Activated CD8-positive, alpha-beta T cell treated with anti-CD3 and anti-CD28 coated beads for 36 hours (primary cell): ENCODE measurements at regions of chr10 and their contacts with region 1.

Region 1: DNA sequence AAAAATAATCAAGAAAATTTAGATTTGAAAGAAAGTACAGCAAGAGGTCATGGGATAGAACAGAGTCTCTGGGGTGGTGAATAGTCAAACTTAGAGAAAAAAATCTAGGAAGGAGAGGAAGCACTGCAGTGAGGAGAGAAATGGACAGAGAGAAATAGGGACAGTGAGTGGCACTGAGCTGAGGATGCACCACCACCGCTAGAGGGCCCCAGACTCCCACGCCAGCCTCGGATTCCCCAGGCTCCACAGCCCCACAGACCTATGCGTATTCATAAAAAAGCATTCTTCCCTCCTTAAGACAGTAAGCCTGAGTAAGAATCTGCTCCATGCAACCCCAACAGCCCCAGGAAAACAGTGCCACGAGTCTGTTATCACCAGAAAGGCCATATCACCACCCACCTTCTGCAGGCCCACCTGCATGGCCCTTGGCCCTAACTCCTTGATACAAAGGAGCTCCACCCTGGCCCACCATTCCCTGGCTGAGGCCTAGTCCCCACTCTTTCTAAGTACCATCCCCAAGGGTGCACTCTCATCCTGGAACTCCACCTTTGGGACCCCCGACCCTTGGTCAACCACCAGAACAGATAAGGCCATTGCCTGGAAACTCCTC is 91.0 kb downstream of the ALOX5 start:
- DNase-seq: peak; percentile 85
- ATAC-seq: peak; percentile 98
- H3K4me3 Mint-ChIP-seq: no peak overlapping the region
- H3K27ac Mint-ChIP-seq: no peak overlapping the region
- H3K4me1 Mint-ChIP-seq: peaks cover 18% of the 10 kb centered on the region
- H3K27me3 Mint-ChIP-seq: no peaks in the 10 kb centered on the region
- CTCF ChIP-seq: peak; percentile 94

Region 2: GRCh38 chr10:45265995-45266394 is 199.1 kb before region 1 on chr10:
- CTCF ChIA-PET with region 1: no interaction called
- POLR2A ChIA-PET with region 1: no interaction called
- intact Hi-C with region 1: no loop called
- DNase-seq: no peak
- ATAC-seq: no peak
- H3K4me3 Mint-ChIP-seq: no peak overlapping the region
- H3K27ac Mint-ChIP-seq: no peak overlapping the region
- H3K4me1 Mint-ChIP-seq: no peaks in the 10 kb centered on the region
- H3K27me3 Mint-ChIP-seq: peaks cover 24% of the 10 kb centered on the region
- CTCF ChIP-seq: no peak

Region 3: GRCh38 chr10:45453639-45454255 is 11.3 kb before region 1 on chr10:
- CTCF ChIA-PET with region 1: interaction called, 10 read pairs
- POLR2A ChIA-PET with region 1: no interaction called
- intact Hi-C with region 1: no loop called
- DNase-seq: no peak
- ATAC-seq: no peak
- H3K4me3 Mint-ChIP-seq: no peak overlapping the region
- H3K27ac Mint-ChIP-seq: no peak overlapping the region
- H3K4me1 Mint-ChIP-seq: peaks cover 11% of the 10 kb centered on the region
- H3K27me3 Mint-ChIP-seq: no peaks in the 10 kb centered on the region
- CTCF ChIP-seq: no peak

Region 4: DNA sequence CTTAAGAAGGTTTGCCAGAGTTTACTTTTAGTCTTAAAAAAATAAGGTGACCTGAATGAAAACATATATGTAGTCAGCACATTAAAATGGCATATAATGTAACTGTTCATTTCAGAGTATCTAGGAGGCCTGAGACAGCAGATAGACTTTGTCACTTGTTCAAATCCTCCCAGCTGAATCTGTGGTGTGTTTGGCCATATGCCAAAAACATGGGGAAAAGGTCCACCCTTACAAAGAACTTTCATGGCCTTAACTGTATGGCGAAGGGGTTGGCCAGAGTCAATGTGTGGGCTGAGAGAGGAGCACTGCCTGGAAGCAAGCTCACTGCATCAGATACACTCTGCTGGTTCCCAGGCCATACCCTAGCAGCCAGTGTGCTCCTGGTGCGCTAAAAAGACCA is 22.7 kb after region 1 on chr10:
- CTCF ChIA-PET with region 1: interaction called, 10 read pairs
- POLR2A ChIA-PET with region 1: interaction called, 3 read pairs
- intact Hi-C with region 1: no loop called
- DNase-seq: no peak
- ATAC-seq: no peak
- H3K4me3 Mint-ChIP-seq: no peak overlapping the region
- H3K27ac Mint-ChIP-seq: no peak overlapping the region
- H3K4me1 Mint-ChIP-seq: no peaks in the 10 kb centered on the region
- H3K27me3 Mint-ChIP-seq: no peaks in the 10 kb centered on the region
- CTCF ChIP-seq: no peak

Region 5: DNA sequence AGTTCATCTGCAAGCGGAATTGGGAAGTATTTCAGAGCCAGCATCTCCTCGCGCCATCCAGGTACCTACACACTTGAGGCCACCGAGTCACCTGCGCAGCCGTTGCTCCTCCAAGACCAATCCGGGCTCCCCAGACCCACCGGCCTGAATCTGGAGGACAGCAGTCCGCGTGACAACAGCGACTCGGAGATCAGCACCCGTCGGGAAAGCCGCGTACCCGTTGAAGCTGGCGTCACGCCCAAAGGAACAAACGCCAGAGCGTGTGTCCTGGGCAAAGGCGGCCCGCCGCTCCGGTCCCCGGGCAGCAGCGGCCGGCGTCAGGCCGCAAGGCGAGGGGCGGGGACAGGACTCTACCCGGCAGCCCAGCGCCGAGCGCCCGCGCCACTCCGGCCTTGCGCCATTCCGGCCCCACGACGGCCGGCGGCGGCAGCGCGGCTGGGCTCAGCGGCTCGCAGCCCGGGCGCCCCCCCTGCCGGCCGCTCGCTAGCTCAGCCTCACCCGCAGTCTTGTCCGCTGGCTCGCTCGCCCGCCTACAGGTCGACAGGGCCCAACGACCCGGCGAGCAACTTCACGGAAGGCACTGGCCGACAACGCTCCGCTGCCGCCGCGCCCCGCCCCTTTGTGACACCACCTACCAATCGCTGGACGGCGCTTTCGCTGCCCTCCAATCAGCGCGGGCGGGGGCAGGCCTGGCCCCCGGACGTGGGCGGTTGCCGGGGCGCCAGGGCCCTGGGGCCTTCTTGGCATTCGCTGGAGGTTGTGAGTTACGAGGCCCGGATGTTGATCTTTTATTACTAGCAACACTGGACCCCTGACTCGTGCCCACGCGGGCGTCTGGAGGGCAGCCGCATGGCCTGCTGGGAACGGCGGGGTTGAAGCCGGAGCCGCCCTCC is 207.4 kb after region 1 on chr10 and contains the start of gene ZFAND4:
- CTCF ChIA-PET with region 1: interaction called, 21 read pairs
- POLR2A ChIA-PET with region 1: interaction called, 3 read pairs
- intact Hi-C with region 1: loop called (anchors 5 kb)
- DNase-seq: peak; percentile 97
- ATAC-seq: peak; percentile 96
- H3K4me3 Mint-ChIP-seq: peak within 1 kb of the TSS; percentile 93
- H3K27ac Mint-ChIP-seq: peak within 1 kb of the TSS; percentile 90
- H3K4me1 Mint-ChIP-seq: peaks cover 32% of the 10 kb centered on the region
- H3K27me3 Mint-ChIP-seq: no peaks in the 10 kb centered on the region
- CTCF ChIP-seq: peak; percentile 62
- total RNA-seq, gene ZFAND4: 11.5 to 13.5 TPM